Activated CD8-positive, alpha-beta T cell treated with anti-CD3 and anti-CD28 coated beads for 36 hours (primary cell): ENCODE measurements at regions of chr14 and their contacts with region 1.

Region 1: DNA sequence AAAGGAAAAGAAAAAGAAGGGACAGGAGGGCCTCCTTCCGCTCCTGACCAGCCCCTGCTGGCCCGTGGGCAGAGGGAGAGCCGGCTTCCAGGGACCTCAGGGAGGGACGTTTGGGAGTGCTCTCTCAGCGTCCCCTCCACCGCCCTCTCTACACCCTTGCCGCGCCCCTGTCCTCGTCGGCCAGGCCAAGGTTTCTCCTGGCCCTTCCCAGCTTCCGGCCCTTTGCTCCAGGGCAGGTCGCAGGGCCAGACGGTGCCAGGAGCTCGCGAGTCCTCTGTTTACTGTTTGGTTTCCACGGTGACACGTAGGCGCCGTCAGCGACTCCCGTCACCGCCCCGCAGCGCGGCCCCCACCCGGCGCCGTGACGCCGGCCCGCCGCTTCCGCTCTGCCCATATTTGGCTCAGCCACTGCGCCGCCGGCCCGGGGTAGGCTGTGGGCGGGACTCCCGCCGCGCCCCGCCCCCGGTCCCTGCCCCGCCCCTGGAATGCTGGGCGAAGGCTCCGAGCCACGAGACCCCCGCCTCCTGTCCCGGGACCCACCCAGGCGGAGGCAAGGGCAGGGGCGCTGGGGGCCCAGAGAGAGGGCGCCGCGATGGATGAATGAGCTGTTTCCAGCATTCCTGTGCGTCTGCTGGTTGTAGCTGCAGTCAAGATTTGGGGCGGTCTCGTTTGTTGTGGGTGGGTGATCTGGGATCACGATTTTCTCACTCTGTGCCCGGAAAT is 15.5 kb downstream of the FOS start:
- DNase-seq: peak; percentile 94
- ATAC-seq: peak; percentile 95
- H3K4me3 Mint-ChIP-seq: peak overlapping the region; percentile 74
- H3K27ac Mint-ChIP-seq: peak overlapping the region; percentile 90
- H3K4me1 Mint-ChIP-seq: peaks cover 22% of the 10 kb centered on the region
- H3K27me3 Mint-ChIP-seq: peaks cover 6% of the 10 kb centered on the region
- CTCF ChIP-seq: no peak

Region 2: GRCh38 chr14:75126679-75127473 is 167.2 kb before region 1 on chr14 and contains the start of gene NEK9:
- CTCF ChIA-PET with region 1: interaction called, 99 read pairs
- POLR2A ChIA-PET with region 1: interaction called, 8 read pairs
- intact Hi-C with region 1: loop called (anchors 2 kb)
- DNase-seq: peak; percentile 93
- ATAC-seq: peak; percentile 94
- H3K4me3 Mint-ChIP-seq: peak within 1 kb of the TSS; percentile 99
- H3K27ac Mint-ChIP-seq: peak within 1 kb of the TSS; percentile 99
- H3K4me1 Mint-ChIP-seq: peaks cover 39% of the 10 kb centered on the region
- H3K27me3 Mint-ChIP-seq: no peaks in the 10 kb centered on the region
- CTCF ChIP-seq: no peak
- total RNA-seq, gene NEK9: 54.9 to 59.5 TPM

Region 3: GRCh38 chr14:75147423-75148071 is 146.5 kb before region 1 on chr14:
- CTCF ChIA-PET with region 1: interaction called, 268 read pairs
- POLR2A ChIA-PET with region 1: no interaction called
- intact Hi-C with region 1: no loop called
- DNase-seq: peak; percentile 47
- ATAC-seq: peak; percentile 67
- H3K4me3 Mint-ChIP-seq: no peak overlapping the region
- H3K27ac Mint-ChIP-seq: no peak overlapping the region
- H3K4me1 Mint-ChIP-seq: peaks cover 59% of the 10 kb centered on the region
- H3K27me3 Mint-ChIP-seq: no peaks in the 10 kb centered on the region
- CTCF ChIP-seq: no peak

Region 4: DNA sequence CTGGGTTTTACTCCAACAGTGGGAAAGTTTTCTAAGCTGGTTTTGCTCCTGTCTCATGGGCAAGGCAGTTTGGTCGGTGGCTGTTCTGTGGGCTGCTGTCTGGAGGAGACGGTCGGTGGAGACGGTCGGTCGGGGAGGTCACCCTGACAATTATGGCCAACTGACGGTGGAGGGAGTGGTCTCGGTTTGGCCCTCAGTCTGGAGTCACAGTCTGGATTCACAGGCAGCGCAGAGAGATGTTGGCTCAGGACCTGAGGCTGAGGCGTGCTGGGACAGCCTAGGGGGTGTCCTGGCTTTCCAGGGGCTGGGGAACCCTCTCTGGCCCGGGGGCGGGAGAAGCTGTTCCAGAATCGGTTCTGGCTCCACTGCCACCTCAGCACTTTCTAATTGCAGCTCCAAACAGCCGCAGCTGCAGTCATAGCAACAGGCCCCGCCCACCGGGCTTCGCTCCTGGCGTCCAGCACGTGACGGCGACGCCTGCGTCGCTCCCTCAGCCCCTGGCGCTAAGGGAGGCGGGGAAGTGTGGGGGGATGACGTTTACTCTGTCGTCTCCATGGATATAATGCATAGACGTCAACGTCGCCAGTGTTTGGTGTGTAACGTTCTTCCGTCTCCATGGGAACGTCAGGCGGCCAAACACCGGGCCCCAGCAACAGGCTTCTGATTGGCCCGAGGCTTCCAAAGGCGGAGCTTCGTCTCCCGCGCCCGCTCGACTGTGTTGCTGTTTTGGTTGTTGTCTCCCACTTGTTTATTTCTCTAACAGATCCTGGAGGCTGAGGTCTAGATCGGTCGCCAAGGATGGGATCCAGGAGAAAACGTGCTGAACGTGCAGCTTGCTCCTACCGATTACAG is 35.2 kb before region 1 on chr14:
- CTCF ChIA-PET with region 1: interaction called, 15 read pairs
- POLR2A ChIA-PET with region 1: interaction called, 5 read pairs
- intact Hi-C with region 1: no loop called
- DNase-seq: peak; percentile 99
- ATAC-seq: peak; percentile 98
- H3K4me3 Mint-ChIP-seq: peak overlapping the region; percentile 84
- H3K27ac Mint-ChIP-seq: peak overlapping the region; percentile 99
- H3K4me1 Mint-ChIP-seq: peaks cover 24% of the 10 kb centered on the region
- H3K27me3 Mint-ChIP-seq: peaks cover 3% of the 10 kb centered on the region
- CTCF ChIP-seq: no peak

Region 5: GRCh38 chr14:75307700-75308379 is 13.8 kb after region 1 on chr14:
- CTCF ChIA-PET with region 1: interaction called, 13 read pairs
- POLR2A ChIA-PET with region 1: no interaction called
- intact Hi-C with region 1: no loop called
- DNase-seq: peak; percentile 82
- ATAC-seq: peak; percentile 62
- H3K4me3 Mint-ChIP-seq: no peak overlapping the region
- H3K27ac Mint-ChIP-seq: no peak overlapping the region
- H3K4me1 Mint-ChIP-seq: peaks cover 13% of the 10 kb centered on the region
- H3K27me3 Mint-ChIP-seq: peaks cover 1% of the 10 kb centered on the region
- CTCF ChIP-seq: peak; percentile 97

Region 6: GRCh38 chr14:75318353-75318752 is 24.3 kb after region 1 on chr14:
- CTCF ChIA-PET with region 1: no interaction called
- POLR2A ChIA-PET with region 1: no interaction called
- intact Hi-C with region 1: no loop called
- DNase-seq: no peak
- ATAC-seq: no peak
- H3K4me3 Mint-ChIP-seq: no peak overlapping the region
- H3K27ac Mint-ChIP-seq: no peak overlapping the region
- H3K4me1 Mint-ChIP-seq: no peaks in the 10 kb centered on the region
- H3K27me3 Mint-ChIP-seq: peaks cover 1% of the 10 kb centered on the region
- CTCF ChIP-seq: no peak